GM12878 (cell line): ENCODE measurements at regions of chr3 and their contacts with region 1.

Region 1: GRCh38 chr3:190321789-190322603 is at the start of gene CLDN1:
- DNase-seq: no peak
- ATAC-seq: peak; percentile 83
- H3K4me3 ChIP-seq: peak within 1 kb of the TSS; percentile 61; the same call in 1 of the 2 replicates
- H3K27ac ChIP-seq: no peak within 1 kb of the TSS
- H3K4me1 ChIP-seq: no peaks in the 10 kb centered on the region
- H3K27me3 ChIP-seq: peaks cover 2 to 8% of the 10 kb centered on the region in 2 experiments; a peak in 3 of 4 replicates
- CTCF ChIP-seq: peak; percentile 70 to 74 (median 72); a peak in 5 of 6 replicates
- EP300 ChIP-seq: no peak
- POLR2A ChIP-seq: no peak
- RAD21 ChIP-seq: peak; percentile 78
- polyA plus RNA-seq, gene CLDN1: 3.4 to 3.9 TPM

Region 2: GRCh38 chr3:190294030-190294429 is 28.0 kb before region 1 on chr3:
- CTCF ChIA-PET with region 1: interaction called, 45 read pairs
- POLR2A ChIA-PET with region 1: interaction called, 8 read pairs
- RAD21 ChIA-PET with region 1: interaction called, 11 read pairs
- SMC1A ChIA-PET with region 1: interaction called, 11 read pairs
- in situ Hi-C with region 1: no loop called
- intact Hi-C with region 1: no loop called
- DNase-seq: no peak
- ATAC-seq: peak; percentile 40
- H3K4me3 ChIP-seq: no peak overlapping the region
- H3K27ac ChIP-seq: no peak overlapping the region
- H3K4me1 ChIP-seq: no peaks in the 10 kb centered on the region
- H3K27me3 ChIP-seq: no peaks in the 10 kb centered on the region
- CTCF ChIP-seq: no peak
- EP300 ChIP-seq: no peak
- POLR2A ChIP-seq: no peak
- RAD21 ChIP-seq: no peak

Region 3: GRCh38 chr3:190306513-190307165 is 15.4 kb before region 1 on chr3:
- CTCF ChIA-PET with region 1: interaction called, 45 read pairs
- POLR2A ChIA-PET with region 1: interaction called, 5 read pairs
- RAD21 ChIA-PET with region 1: interaction called, 16 read pairs
- SMC1A ChIA-PET with region 1: interaction called, 46 read pairs
- in situ Hi-C with region 1: no loop called
- intact Hi-C with region 1: no loop called
- DNase-seq: no peak
- ATAC-seq: peak; percentile 37
- H3K4me3 ChIP-seq: no peak overlapping the region
- H3K27ac ChIP-seq: no peak overlapping the region
- H3K4me1 ChIP-seq: no peaks in the 10 kb centered on the region
- H3K27me3 ChIP-seq: no peaks in the 10 kb centered on the region
- CTCF ChIP-seq: no peak
- EP300 ChIP-seq: no peak
- POLR2A ChIP-seq: no peak
- RAD21 ChIP-seq: no peak

Region 4: GRCh38 chr3:190345027-190345821 is 23.2 kb after region 1 on chr3:
- CTCF ChIA-PET with region 1: interaction called, 11 read pairs
- POLR2A ChIA-PET with region 1: interaction called, 3 read pairs
- RAD21 ChIA-PET with region 1: interaction called, 6 read pairs
- SMC1A ChIA-PET with region 1: interaction called, 11 read pairs
- in situ Hi-C with region 1: no loop called
- intact Hi-C with region 1: no loop called
- DNase-seq: no peak
- ATAC-seq: peak; percentile 80
- H3K4me3 ChIP-seq: no peak overlapping the region
- H3K27ac ChIP-seq: no peak overlapping the region
- H3K4me1 ChIP-seq: no peaks in the 10 kb centered on the region
- H3K27me3 ChIP-seq: no peaks in the 10 kb centered on the region
- CTCF ChIP-seq: no peak
- EP300 ChIP-seq: no peak
- POLR2A ChIP-seq: no peak
- RAD21 ChIP-seq: no peak

Region 5: GRCh38 chr3:190384241-190384863 is 62.4 kb after region 1 on chr3:
- CTCF ChIA-PET with region 1: interaction called, 24 read pairs
- POLR2A ChIA-PET with region 1: interaction called, 3 read pairs
- RAD21 ChIA-PET with region 1: interaction called, 23 read pairs
- SMC1A ChIA-PET with region 1: interaction called, 34 read pairs
- in situ Hi-C with region 1: no loop called
- intact Hi-C with region 1: no loop called
- DNase-seq: peak; percentile 19
- ATAC-seq: peak; percentile 94
- H3K4me3 ChIP-seq: no peak overlapping the region
- H3K27ac ChIP-seq: no peak overlapping the region
- H3K4me1 ChIP-seq: no peaks in the 10 kb centered on the region
- H3K27me3 ChIP-seq: no peaks in the 10 kb centered on the region
- CTCF ChIP-seq: peak; percentile 49 to 68 (median 59); a peak in 5 of 6 replicates
- EP300 ChIP-seq: no peak
- POLR2A ChIP-seq: no peak
- RAD21 ChIP-seq: peak; percentile 82